ENCODE measurements at regions of chr12 and their contacts with region 1.

Region 1: GRCh38 chr12:25364529-25365339 is 114.0 kb upstream of the KRAS start:
- DNase-seq: peak; percentile 17
- ATAC-seq: peak; percentile 51
- H3K4me3 ChIP-seq: peak overlapping the region in 2 of 5 experiments; percentile 12 to 17
- H3K4me3 Mint-ChIP-seq: peak overlapping the region; percentile 21
- H3K27ac ChIP-seq: no peak overlapping the region
- H3K27ac Mint-ChIP-seq: no peak overlapping the region
- H3K4me1 ChIP-seq: peaks cover 13 to 15% of the 10 kb centered on the region in 2 donors
- H3K4me1 Mint-ChIP-seq: peaks cover 17% of the 10 kb centered on the region
- H3K27me3 ChIP-seq: peaks cover 0 to 5% (median 0%) of the 10 kb centered on the region in 4 experiments
- H3K27me3 Mint-ChIP-seq: no peaks in the 10 kb centered on the region
- CTCF ChIP-seq: no peak

Region 2: DNA sequence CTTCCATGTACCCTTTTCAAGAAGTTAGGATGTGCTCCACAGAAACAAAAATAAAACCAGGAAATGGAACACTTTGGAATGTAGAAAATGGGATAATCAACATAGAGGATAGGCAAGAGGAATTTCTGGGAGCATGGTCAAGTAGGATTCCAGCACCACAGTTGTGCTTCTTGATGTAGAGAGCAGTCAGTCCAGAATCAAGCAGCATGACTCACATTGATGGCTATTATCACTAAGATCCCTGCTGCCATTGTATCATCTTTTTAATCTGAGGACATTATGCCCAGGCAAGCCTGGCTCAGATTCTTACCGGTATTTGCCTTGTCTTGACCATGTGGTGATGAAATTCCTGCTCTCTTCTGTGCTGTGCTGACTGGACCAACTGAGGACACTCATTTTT is 164.0 kb before region 1 on chr12:
- CTCF ChIA-PET with region 1: no interaction called
- POLR2A ChIA-PET with region 1: no interaction called
- intact Hi-C with region 1: no loop called
- DNase-seq: no peak
- ATAC-seq: no peak
- H3K4me3 ChIP-seq: no peak overlapping the region
- H3K4me3 Mint-ChIP-seq: no peak overlapping the region
- H3K27ac ChIP-seq: no peak overlapping the region
- H3K27ac Mint-ChIP-seq: no peak overlapping the region
- H3K4me1 ChIP-seq: peaks cover 9 to 10% of the 10 kb centered on the region in 2 donors
- H3K4me1 Mint-ChIP-seq: peaks cover 35% of the 10 kb centered on the region
- H3K27me3 ChIP-seq: no peaks in the 10 kb centered on the region
- H3K27me3 Mint-ChIP-seq: no peaks in the 10 kb centered on the region
- CTCF ChIP-seq: no peak

Region 3: DNA sequence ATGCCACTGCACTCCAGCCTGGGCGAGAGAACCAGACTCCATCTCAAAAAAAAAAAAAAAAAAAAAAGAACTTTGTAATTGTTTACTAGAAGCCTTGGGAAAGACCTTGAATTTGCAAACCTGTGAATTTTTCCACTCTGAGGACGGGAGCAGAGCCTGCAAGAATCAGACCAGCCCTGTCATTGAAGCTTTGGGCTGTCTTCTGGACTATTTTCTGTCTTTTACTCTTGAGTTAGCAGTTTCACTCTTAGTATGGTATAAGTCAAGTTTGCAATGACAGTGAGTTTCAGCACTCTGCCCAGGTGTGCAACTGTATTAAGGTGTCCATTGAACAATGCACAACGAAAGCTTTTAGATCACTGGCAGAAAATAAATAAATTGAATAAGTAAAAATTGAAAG is 32.6 kb before region 1 on chr12:
- CTCF ChIA-PET with region 1: no interaction called
- POLR2A ChIA-PET with region 1: no interaction called
- intact Hi-C with region 1: loop called (anchors 2 kb)
- DNase-seq: no peak
- ATAC-seq: no peak
- H3K4me3 ChIP-seq: no peak overlapping the region
- H3K4me3 Mint-ChIP-seq: no peak overlapping the region
- H3K27ac ChIP-seq: no peak overlapping the region
- H3K27ac Mint-ChIP-seq: no peak overlapping the region
- H3K4me1 ChIP-seq: peaks cover 3 to 4% of the 10 kb centered on the region in 2 donors
- H3K4me1 Mint-ChIP-seq: peaks cover 13% of the 10 kb centered on the region
- H3K27me3 ChIP-seq: no peaks in the 10 kb centered on the region
- H3K27me3 Mint-ChIP-seq: no peaks in the 10 kb centered on the region
- CTCF ChIP-seq: no peak

Measured in B cell (primary cell).